Colonic mucosa (tissue), 4 donors: ENCODE measurements at regions of chr13 and their contacts with region 1.

Region 1: DNA sequence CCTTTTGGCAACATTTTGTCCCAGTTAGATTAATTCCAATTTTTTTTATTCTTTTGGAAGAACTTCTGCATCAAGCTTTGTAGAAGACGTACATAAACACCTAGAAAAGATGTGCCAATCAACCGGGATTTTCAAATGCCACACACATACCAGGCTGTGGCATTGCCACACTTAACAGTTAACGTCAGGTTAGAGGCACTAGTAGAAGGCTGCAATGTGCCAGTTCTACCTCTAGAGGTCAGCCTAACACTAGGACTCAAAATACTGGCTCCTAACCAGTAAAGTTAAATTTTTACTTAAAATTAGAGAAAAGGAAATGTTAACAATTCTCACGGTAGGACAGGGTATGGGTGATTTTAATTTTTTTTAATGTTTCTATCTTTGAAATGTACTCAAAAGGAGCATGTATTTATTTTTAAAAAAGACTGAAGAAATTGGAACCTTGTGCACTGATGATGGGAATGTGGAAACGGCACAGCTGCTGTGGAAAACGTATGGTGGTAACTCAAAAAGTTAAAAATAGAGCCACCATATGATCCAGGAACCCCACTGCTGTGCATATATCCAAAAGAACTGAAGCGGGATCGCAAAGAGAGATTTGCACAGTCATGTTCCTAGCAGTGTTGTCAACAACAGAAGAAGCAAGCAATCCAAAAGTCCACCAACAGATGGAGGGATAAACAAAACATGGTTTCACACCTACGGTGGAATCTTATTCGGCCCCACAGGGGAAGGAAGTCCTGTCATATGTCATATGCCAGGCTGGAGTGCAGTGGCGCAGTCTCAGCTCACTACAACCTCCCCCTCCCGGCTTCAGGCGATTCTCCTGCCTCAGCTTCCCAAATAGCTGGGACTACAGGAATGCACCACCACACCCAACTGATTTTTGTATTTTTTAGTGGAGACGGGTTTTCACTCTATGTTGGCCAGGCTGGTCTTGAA is 30.3 kb downstream of the CRYL1 start:
- DNase-seq: peak; percentile 74
- H3K4me3 ChIP-seq: no peak overlapping the region
- H3K27ac ChIP-seq: no peak overlapping the region
- H3K4me1 ChIP-seq: no peaks in the 10 kb centered on the region
- H3K27me3 ChIP-seq: no peaks in the 10 kb centered on the region
- CTCF ChIP-seq: peak; percentile 94

Region 2: GRCh38 chr13:19345158-19345557 is 1150.2 kb before region 1 on chr13:
- intact Hi-C with region 1: no loop called
- DNase-seq: no peak
- H3K4me3 ChIP-seq: no peak overlapping the region
- H3K27ac ChIP-seq: no peak overlapping the region
- H3K4me1 ChIP-seq: no peaks in the 10 kb centered on the region
- H3K27me3 ChIP-seq: no peaks in the 10 kb centered on the region
- CTCF ChIP-seq: no peak

Region 3: GRCh38 chr13:20546556-20546955 is 51.2 kb after region 1 on chr13:
- intact Hi-C with region 1: no loop called
- DNase-seq: no peak
- H3K4me3 ChIP-seq: no peak overlapping the region
- H3K27ac ChIP-seq: peak overlapping the region; percentile 74
- H3K4me1 ChIP-seq: peaks cover 4% of the 10 kb centered on the region
- H3K27me3 ChIP-seq: no peaks in the 10 kb centered on the region
- CTCF ChIP-seq: no peak

Region 4: GRCh38 chr13:20580257-20580656 is 84.9 kb after region 1 on chr13:
- intact Hi-C with region 1: loop called (anchors 10 kb)
- DNase-seq: no peak
- H3K4me3 ChIP-seq: no peak overlapping the region
- H3K27ac ChIP-seq: no peak overlapping the region
- H3K4me1 ChIP-seq: no peaks in the 10 kb centered on the region
- H3K27me3 ChIP-seq: no peaks in the 10 kb centered on the region
- CTCF ChIP-seq: no peak

Region 5: DNA sequence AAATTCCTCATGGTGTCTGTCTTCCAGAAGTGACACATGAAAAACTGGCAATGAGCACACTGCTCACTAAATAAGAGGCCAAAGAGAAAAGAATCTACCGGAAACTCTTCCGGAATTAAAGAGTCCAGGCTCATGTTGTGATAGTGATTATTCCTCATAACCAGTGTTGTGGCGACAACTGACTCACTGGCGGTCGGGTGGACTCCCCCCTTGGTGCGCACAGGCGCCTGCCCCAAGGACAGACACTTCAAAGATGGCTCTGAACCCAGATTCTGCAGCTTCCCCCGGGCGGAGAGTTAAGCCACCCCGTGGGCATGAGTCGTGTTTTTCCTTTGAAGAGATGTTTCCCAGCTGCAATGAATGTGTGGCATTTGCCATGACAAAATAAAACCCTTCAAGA is 218.4 kb after region 1 on chr13:
- intact Hi-C with region 1: loop called (anchors 5 kb)
- DNase-seq: no peak
- H3K4me3 ChIP-seq: no peak overlapping the region
- H3K27ac ChIP-seq: no peak overlapping the region
- H3K4me1 ChIP-seq: no peaks in the 10 kb centered on the region
- H3K27me3 ChIP-seq: no peaks in the 10 kb centered on the region
- CTCF ChIP-seq: no peak

Region 6: DNA sequence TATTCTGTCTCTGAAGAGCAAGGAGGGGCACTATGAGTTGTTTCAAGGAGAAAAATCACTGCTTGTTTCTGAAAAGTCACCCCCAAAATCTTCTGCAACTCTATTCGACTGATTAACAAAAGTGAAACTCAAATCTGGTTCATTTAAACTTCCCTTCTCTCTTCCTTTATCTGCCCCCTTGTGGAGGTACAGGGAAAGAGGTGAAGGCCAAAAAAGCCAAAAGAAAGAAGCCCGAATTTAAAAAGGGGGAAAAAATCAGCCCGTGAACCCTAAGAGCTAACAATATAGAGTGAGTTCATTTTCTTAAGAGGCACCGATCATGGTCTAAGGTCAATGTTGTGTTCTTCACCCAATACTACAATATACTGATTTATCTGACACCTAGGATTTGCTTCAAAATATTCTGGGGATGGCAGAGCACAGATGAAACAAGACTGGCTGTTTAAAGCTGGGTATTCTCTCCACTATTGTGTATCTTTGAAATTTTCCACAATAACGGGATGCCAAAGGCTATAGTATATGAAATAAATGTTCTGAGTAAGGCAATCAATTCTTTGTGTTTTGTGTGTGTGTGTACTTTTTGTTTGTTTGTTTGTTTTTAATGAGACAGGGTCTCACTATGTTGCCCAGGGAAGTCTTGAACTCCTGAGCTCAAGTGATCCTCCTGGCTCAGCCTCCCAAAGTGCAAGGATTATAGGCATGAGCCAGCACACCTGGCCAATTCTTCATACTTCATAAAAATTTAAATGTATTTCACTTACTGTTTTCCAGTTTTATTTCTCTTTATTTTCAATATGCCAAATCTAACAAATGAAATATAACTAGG is 333.4 kb after region 1 on chr13:
- intact Hi-C with region 1: loop called (anchors 2 kb)
- DNase-seq: peak; percentile 47
- H3K4me3 ChIP-seq: no peak overlapping the region
- H3K27ac ChIP-seq: no peak overlapping the region
- H3K4me1 ChIP-seq: no peaks in the 10 kb centered on the region
- H3K27me3 ChIP-seq: no peaks in the 10 kb centered on the region
- CTCF ChIP-seq: peak; percentile 81

Region 7: DNA sequence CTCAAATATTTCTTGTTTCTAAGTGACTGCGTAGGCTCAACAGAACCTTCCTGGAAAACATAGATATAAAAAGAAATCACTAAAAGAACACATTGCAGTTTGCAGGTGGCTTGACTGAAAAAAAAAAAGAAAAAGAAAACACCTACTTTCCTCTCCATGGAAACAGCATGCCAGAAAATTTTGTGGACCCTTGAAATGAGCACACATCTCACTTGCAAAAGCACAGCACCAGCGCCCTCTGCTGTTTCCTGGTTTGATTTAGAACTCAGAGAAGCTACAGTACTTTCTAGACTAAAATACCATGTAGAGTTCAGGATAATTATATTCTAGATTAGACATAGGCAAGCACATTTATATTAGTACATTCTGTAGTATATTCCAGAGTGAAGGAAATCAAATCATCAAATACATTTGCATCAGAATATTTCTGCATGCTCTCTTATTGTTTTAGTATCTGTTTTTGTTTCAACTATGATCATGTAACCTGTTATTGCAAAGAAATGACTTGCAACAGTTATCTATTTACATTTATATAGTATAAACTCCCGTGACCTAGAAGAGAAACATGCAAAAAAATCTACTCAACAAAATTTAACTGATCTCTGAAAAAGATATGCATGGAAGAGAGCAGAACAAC is 429.5 kb after region 1 on chr13:
- intact Hi-C with region 1: loop called (anchors 2 kb)
- DNase-seq: peak; percentile 84
- H3K4me3 ChIP-seq: no peak overlapping the region
- H3K27ac ChIP-seq: no peak overlapping the region
- H3K4me1 ChIP-seq: no peaks in the 10 kb centered on the region
- H3K27me3 ChIP-seq: no peaks in the 10 kb centered on the region
- CTCF ChIP-seq: peak; percentile 61